Activated CD4-positive, alpha-beta memory T cell treated with anti-CD3 and anti-CD28 coated beads for 36 hours (primary cell): ENCODE measurements at regions of chr20 and their contacts with region 1.

Region 1: GRCh38 chr20:5529331-5530148 is 212.8 kb upstream of the PROKR2 start:
- DNase-seq: peak; percentile 95
- H3K4me3 Mint-ChIP-seq: peak overlapping the region; percentile 21
- H3K27ac Mint-ChIP-seq: peak overlapping the region; percentile 61
- H3K4me1 Mint-ChIP-seq: peaks cover 26% of the 10 kb centered on the region
- H3K27me3 Mint-ChIP-seq: no peaks in the 10 kb centered on the region

Region 2: DNA sequence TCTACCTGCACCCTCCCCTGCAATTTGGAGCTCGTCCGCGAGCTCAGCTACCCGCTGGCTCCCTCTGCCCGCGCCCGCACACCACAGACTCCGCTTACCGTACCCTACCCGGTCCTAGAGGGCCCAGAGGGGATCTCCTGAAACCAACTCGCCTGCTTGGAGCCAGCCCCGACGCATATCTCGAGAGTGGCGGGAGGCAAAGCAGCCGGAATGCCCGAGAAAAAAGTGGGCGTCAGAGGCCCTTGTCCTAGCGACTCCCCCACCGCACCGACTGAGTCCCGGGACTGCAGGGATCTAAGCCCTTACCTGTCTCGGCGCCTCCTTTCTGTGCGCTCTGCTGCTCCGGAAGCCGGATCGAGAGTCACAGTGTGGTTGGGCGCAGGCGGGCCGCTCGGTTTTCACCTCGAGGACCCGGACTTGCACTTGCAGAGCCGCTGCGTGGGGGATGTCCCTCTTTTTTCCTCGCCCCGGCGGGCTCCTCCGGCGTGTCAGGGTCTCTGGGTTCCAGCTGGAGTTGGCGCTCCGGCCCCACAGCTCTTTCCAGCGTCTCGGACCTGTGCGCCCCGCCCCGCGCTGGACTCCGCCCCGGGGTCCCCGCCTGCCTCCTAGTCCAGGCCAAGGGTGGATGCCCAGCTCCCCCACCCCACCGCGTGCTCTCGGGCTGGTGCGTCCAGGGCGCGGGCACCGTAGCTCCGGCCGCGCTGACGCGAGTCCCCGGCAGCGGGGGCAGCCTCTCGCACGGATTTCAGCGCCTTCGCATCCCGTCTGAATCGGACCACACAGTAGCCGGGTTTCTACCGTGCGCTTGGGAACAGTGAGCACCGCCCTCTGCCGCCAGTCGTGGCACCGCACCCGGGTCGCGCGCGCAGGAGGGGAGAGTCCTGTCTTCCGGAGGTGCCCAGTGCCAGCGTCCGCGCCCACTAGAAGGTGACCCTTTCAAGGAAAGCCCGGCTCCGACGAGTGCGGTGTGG is 213.1 kb before region 1 on chr20 and contains the start of gene PROKR2:
- CTCF ChIA-PET with region 1: no interaction called
- POLR2A ChIA-PET with region 1: no interaction called
- intact Hi-C with region 1: no loop called
- DNase-seq: peak; percentile 27
- H3K4me3 Mint-ChIP-seq: no peak within 1 kb of the TSS
- H3K27ac Mint-ChIP-seq: no peak within 1 kb of the TSS
- H3K4me1 Mint-ChIP-seq: peaks cover 2% of the 10 kb centered on the region
- H3K27me3 Mint-ChIP-seq: peaks cover 36% of the 10 kb centered on the region
- total RNA-seq, gene PROKR2: not detected

Region 3: GRCh38 chr20:5488823-5489222 is 40.7 kb before region 1 on chr20:
- CTCF ChIA-PET with region 1: no interaction called
- POLR2A ChIA-PET with region 1: no interaction called
- intact Hi-C with region 1: no loop called
- DNase-seq: no peak
- H3K4me3 Mint-ChIP-seq: no peak overlapping the region
- H3K27ac Mint-ChIP-seq: no peak overlapping the region
- H3K4me1 Mint-ChIP-seq: peaks cover 4% of the 10 kb centered on the region
- H3K27me3 Mint-ChIP-seq: peaks cover 20% of the 10 kb centered on the region

Region 4: GRCh38 chr20:5557123-5557522 is 27.6 kb after region 1 on chr20:
- CTCF ChIA-PET with region 1: interaction called, 23 read pairs
- POLR2A ChIA-PET with region 1: no interaction called
- intact Hi-C with region 1: no loop called
- DNase-seq: peak; percentile 79
- H3K4me3 Mint-ChIP-seq: no peak overlapping the region
- H3K27ac Mint-ChIP-seq: peak overlapping the region; percentile 21
- H3K4me1 Mint-ChIP-seq: peaks cover 5% of the 10 kb centered on the region
- H3K27me3 Mint-ChIP-seq: no peaks in the 10 kb centered on the region

Region 5: DNA sequence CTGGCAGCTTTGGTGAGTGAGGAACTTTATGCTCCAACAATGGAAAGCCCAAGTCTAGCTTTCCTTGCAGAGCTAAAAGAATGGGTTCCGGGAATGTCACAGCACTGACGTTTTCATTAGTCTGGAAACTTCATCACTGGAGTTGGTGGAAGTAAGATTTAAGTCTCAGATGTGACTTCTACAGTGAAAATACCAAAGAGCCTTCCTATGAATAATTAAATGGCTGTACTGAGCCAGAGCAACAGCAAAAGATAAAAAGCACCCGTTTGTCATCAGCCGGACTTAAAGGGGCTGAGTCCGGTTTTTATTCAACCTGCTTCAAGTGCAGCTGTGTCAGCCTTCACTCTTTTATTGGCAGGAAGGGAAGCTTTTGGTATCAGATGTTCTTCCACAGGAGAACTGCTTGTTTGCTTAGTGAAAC is 174.2 kb after region 1 on chr20:
- CTCF ChIA-PET with region 1: no interaction called
- POLR2A ChIA-PET with region 1: no interaction called
- intact Hi-C with region 1: no loop called
- DNase-seq: no peak
- H3K4me3 Mint-ChIP-seq: no peak overlapping the region
- H3K27ac Mint-ChIP-seq: no peak overlapping the region
- H3K4me1 Mint-ChIP-seq: no peaks in the 10 kb centered on the region
- H3K27me3 Mint-ChIP-seq: no peaks in the 10 kb centered on the region

Region 6: DNA sequence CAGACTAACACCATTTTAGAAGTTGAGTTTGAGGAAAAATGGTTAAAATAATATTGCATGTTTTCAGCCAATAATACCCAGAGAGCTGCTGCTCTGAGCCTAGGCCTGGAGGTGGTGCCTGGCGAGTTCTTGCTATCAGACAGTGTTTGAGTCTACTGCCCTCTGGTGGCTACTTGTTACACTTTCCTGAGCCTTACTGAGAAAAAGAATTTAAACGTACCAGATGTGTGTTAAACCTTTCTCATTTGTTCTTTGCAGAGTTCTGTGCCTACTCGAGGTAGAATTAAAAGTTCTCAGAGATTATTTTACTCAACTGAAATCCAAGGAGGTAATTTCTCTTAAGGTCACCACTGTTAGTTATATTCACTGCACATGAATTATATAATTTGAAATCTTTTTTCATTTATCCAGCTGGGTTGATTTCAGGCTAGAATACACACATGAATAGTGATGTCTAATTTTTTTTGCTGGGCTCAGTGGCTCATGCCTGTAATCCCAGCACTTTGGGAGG is 258.9 kb after region 1 on chr20:
- CTCF ChIA-PET with region 1: interaction called, 233 read pairs
- POLR2A ChIA-PET with region 1: no interaction called
- intact Hi-C with region 1: loop called (anchors 1 kb)
- DNase-seq: peak; percentile 77
- H3K4me3 Mint-ChIP-seq: no peak overlapping the region
- H3K27ac Mint-ChIP-seq: peak overlapping the region; percentile 39
- H3K4me1 Mint-ChIP-seq: peaks cover 13% of the 10 kb centered on the region
- H3K27me3 Mint-ChIP-seq: no peaks in the 10 kb centered on the region

Region 7: DNA sequence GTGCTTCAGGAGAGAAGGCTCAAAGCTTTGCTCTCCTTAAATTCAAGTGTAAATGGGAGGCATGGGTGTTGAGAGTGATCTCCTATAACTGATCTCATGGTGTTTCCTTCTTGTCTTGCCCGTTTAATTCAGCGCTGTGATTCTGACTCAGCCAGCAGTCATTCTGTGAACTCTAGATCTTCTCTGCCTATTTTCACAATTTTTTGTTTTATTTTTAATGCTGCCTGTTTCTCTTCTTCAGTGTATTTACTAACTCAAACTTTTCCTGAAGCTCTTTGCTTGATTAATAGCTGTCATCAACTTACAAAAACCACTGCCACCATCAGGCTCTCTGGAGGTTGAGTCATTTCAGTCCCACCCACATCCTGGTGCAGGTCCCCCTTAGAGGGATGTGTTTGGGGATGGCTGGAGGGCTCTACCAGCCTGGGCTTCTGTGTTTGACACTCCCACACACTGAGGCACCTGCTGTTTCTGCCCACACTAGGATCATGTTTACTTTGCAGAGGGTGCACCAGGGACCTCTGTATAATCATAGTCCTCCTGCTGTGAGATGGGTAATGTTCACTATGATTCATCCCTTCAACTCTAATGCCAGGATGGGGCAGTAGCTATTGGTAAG is 314.6 kb after region 1 on chr20:
- CTCF ChIA-PET with region 1: interaction called, 19 read pairs
- POLR2A ChIA-PET with region 1: no interaction called
- intact Hi-C with region 1: loop called (anchors 1 kb)
- DNase-seq: peak; percentile 87
- H3K4me3 Mint-ChIP-seq: peak overlapping the region; percentile 53
- H3K27ac Mint-ChIP-seq: peak overlapping the region; percentile 79
- H3K4me1 Mint-ChIP-seq: peaks cover 67% of the 10 kb centered on the region
- H3K27me3 Mint-ChIP-seq: no peaks in the 10 kb centered on the region

Region 8: GRCh38 chr20:5950271-5951031 is 420.9 kb after region 1 on chr20 and contains the starts of genes MCM8 and TRMT6:
- CTCF ChIA-PET with region 1: interaction called, 14 read pairs
- POLR2A ChIA-PET with region 1: no interaction called
- intact Hi-C with region 1: loop called (anchors 1 kb)
- DNase-seq: peak; percentile 98
- H3K4me3 Mint-ChIP-seq: peak within 1 kb of the TSS; percentile 88
- H3K27ac Mint-ChIP-seq: peak within 1 kb of the TSS; percentile 95
- H3K4me1 Mint-ChIP-seq: peaks cover 58% of the 10 kb centered on the region
- H3K27me3 Mint-ChIP-seq: peaks cover 1% of the 10 kb centered on the region
- total RNA-seq, gene MCM8: 46.8 to 50.7 TPM
- total RNA-seq, gene TRMT6: 24.9 to 27.1 TPM

Region 9: DNA sequence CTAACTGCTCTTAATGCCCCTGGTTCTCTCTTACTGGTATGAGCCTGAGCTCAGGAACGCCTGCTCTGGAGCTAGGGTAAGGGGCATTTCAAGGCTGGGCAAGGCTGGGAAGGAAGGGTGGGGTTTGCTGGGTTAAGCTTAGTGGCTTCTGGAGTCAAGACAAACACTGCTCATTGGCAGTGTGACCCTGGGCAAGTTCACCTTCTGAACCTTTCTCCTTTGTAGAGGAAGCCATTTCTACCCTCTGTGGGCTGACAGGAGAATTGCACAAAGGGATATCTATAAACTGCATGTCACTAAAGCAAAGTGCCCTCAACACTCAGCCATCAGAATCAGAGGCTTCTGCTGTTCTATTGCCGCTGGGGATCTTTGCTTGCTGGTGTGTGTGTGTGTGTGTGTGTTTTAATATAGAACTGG is 544.6 kb after region 1 on chr20:
- CTCF ChIA-PET with region 1: interaction called, 21 read pairs
- POLR2A ChIA-PET with region 1: no interaction called
- intact Hi-C with region 1: loop called (anchors 1 kb)
- DNase-seq: no peak
- H3K4me3 Mint-ChIP-seq: no peak overlapping the region
- H3K27ac Mint-ChIP-seq: no peak overlapping the region
- H3K4me1 Mint-ChIP-seq: no peaks in the 10 kb centered on the region
- H3K27me3 Mint-ChIP-seq: no peaks in the 10 kb centered on the region